Endothelial cell of umbilical vein (primary cell): ENCODE measurements at regions of chr13 and their contacts with region 1.

Region 1: DNA sequence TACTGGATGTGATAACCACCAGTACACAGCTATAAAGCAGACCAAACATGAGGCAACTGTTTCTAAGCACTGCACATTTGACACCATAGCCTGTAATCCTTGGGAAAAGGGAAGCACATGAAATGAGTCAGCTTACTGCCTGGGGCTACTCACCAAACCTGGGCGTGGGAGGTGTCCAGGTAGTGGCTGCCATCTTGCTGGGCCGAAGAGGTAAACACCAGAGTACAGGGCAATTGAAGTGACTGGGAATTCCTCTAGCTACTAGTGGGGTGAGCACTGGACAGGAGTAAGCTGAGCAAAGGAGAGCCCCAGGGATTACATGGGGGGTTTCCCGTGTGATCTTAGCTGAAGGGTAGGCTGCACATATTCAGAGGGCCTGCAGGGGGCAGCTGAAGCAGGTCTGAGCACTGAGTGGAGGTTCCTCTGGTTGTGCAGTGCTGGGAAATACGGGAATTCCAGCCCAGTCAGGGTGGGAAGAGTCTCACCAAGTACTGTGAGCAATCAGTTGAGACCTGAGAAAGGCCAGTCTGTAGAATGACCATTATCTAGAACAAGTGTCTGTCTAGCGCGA is 140.5 kb downstream of the SLC7A1 start:
- DNase-seq: peak; percentile 24
- H3K4me3 ChIP-seq: no peak overlapping the region
- H3K27ac ChIP-seq: no peak overlapping the region
- H3K4me1 ChIP-seq: peaks cover 3% of the 10 kb centered on the region
- H3K27me3 ChIP-seq: peaks cover 3 to 6% of the 10 kb centered on the region in 2 experiments
- CTCF ChIP-seq: peak; percentile 51 to 71
- POLR2A ChIP-seq: no peak

Region 2: DNA sequence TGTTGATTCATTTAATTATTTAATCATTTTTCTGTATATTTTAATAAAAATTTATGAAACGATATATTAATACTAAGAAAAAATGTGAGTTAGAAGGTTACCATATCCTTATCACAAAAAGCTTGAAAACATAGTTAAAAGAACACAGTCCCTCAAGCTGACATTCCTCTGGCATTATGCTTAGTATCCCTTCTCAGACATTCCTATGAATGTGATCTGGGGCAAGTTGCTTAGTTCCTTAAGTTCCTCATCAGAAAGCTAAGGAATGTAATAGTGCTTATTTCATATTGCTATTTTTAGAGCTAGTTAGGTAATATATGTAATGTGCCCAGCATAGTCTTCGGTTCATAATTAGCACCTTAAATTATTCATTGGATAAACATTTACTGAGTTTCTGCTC is 512.1 kb before region 1 on chr13:
- CTCF ChIA-PET with region 1: no interaction called
- POLR2A ChIA-PET with region 1: no interaction called
- dilution Hi-C with region 1: no loop called
- intact Hi-C with region 1: no loop called
- DNase-seq: no peak
- H3K4me3 ChIP-seq: no peak overlapping the region
- H3K27ac ChIP-seq: no peak overlapping the region
- H3K4me1 ChIP-seq: no peaks in the 10 kb centered on the region
- H3K27me3 ChIP-seq: no peaks in the 10 kb centered on the region
- CTCF ChIP-seq: no peak
- POLR2A ChIP-seq: no peak

Region 3: GRCh38 chr13:29702912-29703351 is 247.9 kb after region 1 on chr13:
- CTCF ChIA-PET with region 1: interaction called, 13 read pairs
- POLR2A ChIA-PET with region 1: no interaction called
- dilution Hi-C with region 1: loop called (anchors 25 kb)
- intact Hi-C with region 1: no loop called
- DNase-seq: peak; percentile 77
- H3K4me3 ChIP-seq: peak overlapping the region in 1 of 3 experiments; percentile 58
- H3K27ac ChIP-seq: peak overlapping the region; percentile 52
- H3K4me1 ChIP-seq: peaks cover 12% of the 10 kb centered on the region
- H3K27me3 ChIP-seq: no peaks in the 10 kb centered on the region
- CTCF ChIP-seq: no peak
- POLR2A ChIP-seq: no peak

Region 4: DNA sequence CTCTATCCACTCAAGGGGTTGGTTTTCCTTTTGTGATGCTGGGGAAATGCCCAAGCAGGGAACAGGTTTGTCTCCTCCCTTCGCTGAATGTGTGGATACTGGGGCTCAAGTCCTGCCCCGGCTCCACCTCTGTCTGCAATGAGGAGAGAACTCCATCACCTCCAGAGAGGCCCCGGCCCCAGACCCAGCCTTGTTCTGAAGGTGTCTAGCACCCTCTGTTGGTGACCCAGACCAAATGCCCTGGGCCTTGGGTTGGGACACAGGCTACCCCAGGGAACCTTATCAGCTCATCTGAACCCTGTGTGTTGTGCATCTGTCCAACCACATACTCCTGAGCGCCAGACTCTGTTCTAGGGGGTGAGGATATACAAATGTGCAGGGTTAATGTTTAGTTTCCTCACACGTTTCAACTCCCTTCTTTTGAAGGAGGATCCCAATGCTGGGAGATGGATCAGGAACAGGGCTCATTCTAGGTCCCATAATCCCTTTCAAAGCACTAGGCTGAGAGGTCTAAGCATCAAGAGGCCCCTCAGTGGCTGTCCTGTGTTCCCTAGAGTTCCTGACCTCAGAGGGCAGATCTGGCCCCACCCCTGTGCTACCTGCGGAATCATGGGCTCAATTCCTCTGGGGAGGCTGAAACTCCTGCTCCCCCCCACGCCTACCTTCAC is 253.0 kb after region 1 on chr13:
- CTCF ChIA-PET with region 1: interaction called, 13 read pairs
- POLR2A ChIA-PET with region 1: no interaction called
- dilution Hi-C with region 1: loop called (anchors 25 kb)
- intact Hi-C with region 1: no loop called
- DNase-seq: peak; percentile 46
- H3K4me3 ChIP-seq: no peak overlapping the region
- H3K27ac ChIP-seq: no peak overlapping the region
- H3K4me1 ChIP-seq: peaks cover 5% of the 10 kb centered on the region
- H3K27me3 ChIP-seq: peaks cover 11 to 14% of the 10 kb centered on the region in 2 experiments
- CTCF ChIP-seq: peak; percentile 80 to 89
- POLR2A ChIP-seq: no peak

Region 5: GRCh38 chr13:29713839-29714238 is 258.8 kb after region 1 on chr13:
- CTCF ChIA-PET with region 1: interaction called, 13 read pairs
- POLR2A ChIA-PET with region 1: no interaction called
- dilution Hi-C with region 1: loop called (anchors 25 kb)
- intact Hi-C with region 1: no loop called
- DNase-seq: peak; percentile 22
- H3K4me3 ChIP-seq: no peak overlapping the region
- H3K27ac ChIP-seq: no peak overlapping the region
- H3K4me1 ChIP-seq: no peaks in the 10 kb centered on the region
- H3K27me3 ChIP-seq: peaks cover 19 to 22% of the 10 kb centered on the region in 2 experiments
- CTCF ChIP-seq: peak; percentile 55 to 76
- POLR2A ChIP-seq: no peak